ENCODE measurements at regions of chr19 and their contacts with region 1.

Region 1: DNA sequence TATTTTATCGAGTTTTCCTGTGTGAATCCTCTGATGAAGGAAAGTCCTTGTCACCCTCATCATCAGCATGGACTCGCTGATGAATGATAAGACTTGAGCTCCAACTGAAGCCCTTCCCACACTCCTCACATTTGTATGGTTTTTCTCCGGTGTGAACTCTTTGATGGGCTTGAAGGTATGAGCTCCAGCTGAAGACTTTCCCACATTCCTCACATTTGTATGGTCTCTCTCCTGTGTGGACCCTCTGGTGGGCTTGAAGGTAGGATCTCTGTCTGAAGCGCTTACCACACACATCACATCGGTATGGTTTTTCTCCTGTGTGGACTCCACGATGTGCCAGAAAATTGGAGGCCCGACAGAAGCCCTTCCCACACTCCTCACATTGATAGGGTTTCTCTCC is 21.7 kb downstream of the ZNF45 start:
- DNase-seq: no peak
- ATAC-seq: no peak
- H3K4me3 ChIP-seq: no peak overlapping the region
- H3K27ac ChIP-seq: no peak overlapping the region
- H3K4me1 ChIP-seq: no peaks in the 10 kb centered on the region
- H3K27me3 ChIP-seq: no peaks in the 10 kb centered on the region
- CTCF ChIP-seq: no peak
- POLR2A ChIP-seq: no peak

Region 2: GRCh38 chr19:43883864-43884263 is 29.5 kb before region 1 on chr19:
- intact Hi-C with region 1: loop called in 1 of 10 experiments (anchors 2 kb)
- DNase-seq: no peak
- ATAC-seq: no peak
- H3K4me3 ChIP-seq: no peak within 1 kb of the TSS
- H3K27ac ChIP-seq: no peak within 1 kb of the TSS
- H3K4me1 ChIP-seq: no peaks in the 10 kb centered on the region
- H3K27me3 ChIP-seq: no peaks in the 10 kb centered on the region
- CTCF ChIP-seq: no peak
- POLR2A ChIP-seq: no peak

Region 3: DNA sequence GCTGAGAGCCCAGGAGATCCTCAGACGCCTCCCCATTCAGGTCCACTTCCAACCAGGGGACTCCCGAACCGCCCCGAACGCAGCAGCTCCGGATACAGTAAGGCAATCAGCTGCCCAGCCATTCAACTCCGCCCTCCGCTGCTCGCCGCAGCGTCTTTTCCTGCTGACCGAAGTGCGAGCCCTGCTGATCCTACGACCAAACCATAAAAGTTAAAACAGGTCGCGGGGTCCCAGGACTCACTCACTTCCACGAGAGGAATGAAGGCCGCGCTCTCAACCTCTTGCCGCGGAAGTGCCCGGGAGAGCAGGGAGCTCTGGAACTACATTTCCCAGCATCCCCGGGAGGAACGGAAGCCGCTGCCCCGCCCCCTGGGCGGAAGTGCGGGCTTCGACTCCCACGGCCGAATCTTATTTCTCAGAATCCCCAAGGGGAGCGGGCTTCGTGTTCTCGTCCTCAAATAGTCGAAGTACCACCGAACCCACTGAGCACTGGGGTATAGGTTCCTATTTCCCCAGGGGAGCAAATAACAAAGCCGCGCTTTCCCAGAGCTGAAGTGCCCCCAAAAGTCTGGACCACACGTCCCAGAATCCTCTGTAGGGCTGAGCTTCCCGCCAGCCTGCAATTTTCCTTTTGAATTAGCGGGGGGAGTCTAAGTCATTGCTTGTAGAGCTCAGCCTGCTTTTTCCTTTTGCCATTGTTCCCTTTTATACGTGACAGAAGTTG is 21.8 kb after region 1 on chr19 and contains the start of gene ZNF45:
- intact Hi-C with region 1: no loop called
- DNase-seq: peak; percentile 91 to 94 (median 92)
- ATAC-seq: peak; percentile 97 to 99 (median 99)
- H3K4me3 ChIP-seq: peak within 1 kb of the TSS; percentile 49 to 77 (median 66)
- H3K27ac ChIP-seq: peak within 1 kb of the TSS; percentile 71 to 93 (median 88)
- H3K4me1 ChIP-seq: peaks cover 0 to 21% (median 12%) of the 10 kb centered on the region in 12 donors
- H3K27me3 ChIP-seq: no peaks in the 10 kb centered on the region
- CTCF ChIP-seq: no peak
- POLR2A ChIP-seq: peak in 1 of 2 donors; percentile 56
- total RNA-seq, gene ZNF45: 4.0 to 9.9 (median 7.2) TPM